MCF 10A (cell line): ENCODE measurements at regions of chr3 and their contacts with region 1.

Region 1: GRCh38 chr3:141271279-141272030 is 39.8 kb downstream of the PXYLP1 start:
- DNase-seq: no peak
- H3K4me3 Mint-ChIP-seq: no peak overlapping the region
- H3K27ac Mint-ChIP-seq: no peak overlapping the region
- H3K4me1 Mint-ChIP-seq: peaks cover 9% of the 10 kb centered on the region
- H3K27me3 Mint-ChIP-seq: no peaks in the 10 kb centered on the region
- CTCF ChIP-seq: no peak

Region 2: GRCh38 chr3:141225939-141226338 is 45.5 kb before region 1 on chr3:
- CTCF ChIA-PET with region 1: no interaction called
- POLR2A ChIA-PET with region 1: no interaction called
- intact Hi-C with region 1: no loop called
- DNase-seq: no peak
- H3K4me3 Mint-ChIP-seq: no peak overlapping the region
- H3K27ac Mint-ChIP-seq: no peak overlapping the region
- H3K4me1 Mint-ChIP-seq: no peaks in the 10 kb centered on the region
- H3K27me3 Mint-ChIP-seq: no peaks in the 10 kb centered on the region
- CTCF ChIP-seq: no peak

Region 3: DNA sequence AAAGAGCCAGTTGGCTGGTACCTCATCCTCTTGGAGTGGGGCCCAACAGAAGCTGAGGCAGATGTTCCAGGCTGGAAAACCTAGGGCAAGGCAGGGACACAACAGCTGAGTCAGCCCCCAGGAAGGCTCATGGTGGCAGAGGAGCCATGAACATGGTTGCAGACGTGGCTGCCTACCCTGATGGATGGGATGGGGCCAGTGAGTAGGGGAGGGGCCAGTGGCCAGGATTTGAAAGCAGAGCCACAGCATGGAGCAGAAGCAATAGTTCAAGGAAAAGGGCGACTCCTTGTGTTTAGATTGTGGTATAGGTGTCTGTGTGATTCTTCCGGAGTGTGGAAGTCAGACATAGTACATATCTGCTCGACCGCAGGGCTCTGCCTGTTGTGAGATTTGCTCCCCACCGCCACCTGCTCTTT is 15.6 kb before region 1 on chr3:
- CTCF ChIA-PET with region 1: interaction called, 11 read pairs
- POLR2A ChIA-PET with region 1: no interaction called
- intact Hi-C with region 1: no loop called
- DNase-seq: peak; percentile 53
- H3K4me3 Mint-ChIP-seq: no peak overlapping the region
- H3K27ac Mint-ChIP-seq: no peak overlapping the region
- H3K4me1 Mint-ChIP-seq: no peaks in the 10 kb centered on the region
- H3K27me3 Mint-ChIP-seq: no peaks in the 10 kb centered on the region
- CTCF ChIP-seq: no peak

Region 4: DNA sequence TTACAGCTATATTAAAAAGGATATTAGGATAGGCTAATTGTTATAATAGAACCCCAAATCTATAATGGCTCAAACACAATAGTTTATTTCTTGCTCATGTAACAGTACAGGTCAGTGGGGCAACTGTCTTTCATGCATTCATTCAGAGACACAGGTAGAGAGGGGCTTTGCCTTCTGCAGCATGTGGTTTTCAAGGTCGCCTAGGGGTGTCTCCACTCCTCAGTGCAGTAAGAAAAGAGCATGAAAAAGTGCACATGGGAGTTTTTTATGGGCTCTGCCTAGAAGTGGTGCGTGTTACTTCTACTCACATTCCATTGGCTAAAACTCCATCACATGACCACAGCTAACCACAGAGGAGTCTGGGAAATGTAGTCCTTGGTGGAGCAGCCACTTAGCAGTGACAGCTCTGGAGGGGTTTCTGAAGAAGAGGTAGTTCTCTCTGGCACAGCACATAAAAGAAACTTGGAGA is 98.6 kb after region 1 on chr3:
- CTCF ChIA-PET with region 1: no interaction called
- POLR2A ChIA-PET with region 1: no interaction called
- intact Hi-C with region 1: no loop called
- DNase-seq: peak; percentile 93
- H3K4me3 Mint-ChIP-seq: peak overlapping the region; percentile 73
- H3K27ac Mint-ChIP-seq: peak overlapping the region; percentile 98
- H3K4me1 Mint-ChIP-seq: peaks cover 56% of the 10 kb centered on the region
- H3K27me3 Mint-ChIP-seq: no peaks in the 10 kb centered on the region
- CTCF ChIP-seq: no peak